Mammary epithelial cell (primary cell): ENCODE measurements at regions of chr10 and their contacts with region 1.

Region 1: GRCh38 chr10:91088300-91089140 is 131.9 kb upstream of the PCGF5 start:
- DNase-seq: peak; percentile 4
- H3K4me3 ChIP-seq: no peak overlapping the region
- H3K27ac ChIP-seq: no peak overlapping the region
- H3K4me1 ChIP-seq: no peaks in the 10 kb centered on the region
- H3K27me3 ChIP-seq: no peaks in the 10 kb centered on the region
- CTCF ChIP-seq: peak in 1 of 2 donors; percentile 34

Region 2: DNA sequence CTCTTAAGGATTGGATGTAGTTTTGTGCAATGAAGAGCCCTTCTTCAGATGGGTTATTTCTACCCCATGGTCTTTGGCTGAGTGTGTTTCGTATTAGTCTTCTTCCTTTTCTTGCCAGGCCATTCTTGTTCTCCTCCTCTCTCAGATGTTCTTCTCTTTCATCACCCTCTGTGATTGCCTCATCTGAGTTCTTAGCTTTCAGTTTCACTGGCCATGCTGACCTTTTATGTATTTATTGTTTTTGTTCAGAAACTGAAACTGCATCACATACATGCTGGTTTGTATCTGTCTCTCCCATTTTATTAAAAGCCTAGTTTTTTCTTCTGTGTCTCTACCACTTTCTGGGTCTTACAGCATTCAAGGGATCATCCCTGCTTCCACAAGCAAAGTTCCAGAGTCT is 110.3 kb after region 1 on chr10:
- CTCF ChIA-PET with region 1: interaction called, 22 read pairs
- dilution Hi-C with region 1: no loop called
- in situ Hi-C with region 1: no loop called
- intact Hi-C with region 1: no loop called
- DNase-seq: peak; percentile 33
- H3K4me3 ChIP-seq: no peak overlapping the region
- H3K27ac ChIP-seq: no peak overlapping the region
- H3K4me1 ChIP-seq: no peaks in the 10 kb centered on the region
- H3K27me3 ChIP-seq: no peaks in the 10 kb centered on the region
- CTCF ChIP-seq: no peak

Region 3: GRCh38 chr10:91367127-91367531 is 278.6 kb after region 1 on chr10:
- CTCF ChIA-PET with region 1: no interaction called
- dilution Hi-C with region 1: no loop called
- in situ Hi-C with region 1: no loop called
- intact Hi-C with region 1: no loop called
- DNase-seq: no peak
- H3K4me3 ChIP-seq: no peak overlapping the region
- H3K27ac ChIP-seq: no peak overlapping the region
- H3K4me1 ChIP-seq: no peaks in the 10 kb centered on the region
- H3K27me3 ChIP-seq: no peaks in the 10 kb centered on the region
- CTCF ChIP-seq: no peak